Keratinocyte (primary cell): ENCODE measurements at regions of chr5 and their contacts with region 1.

Region 1: DNA sequence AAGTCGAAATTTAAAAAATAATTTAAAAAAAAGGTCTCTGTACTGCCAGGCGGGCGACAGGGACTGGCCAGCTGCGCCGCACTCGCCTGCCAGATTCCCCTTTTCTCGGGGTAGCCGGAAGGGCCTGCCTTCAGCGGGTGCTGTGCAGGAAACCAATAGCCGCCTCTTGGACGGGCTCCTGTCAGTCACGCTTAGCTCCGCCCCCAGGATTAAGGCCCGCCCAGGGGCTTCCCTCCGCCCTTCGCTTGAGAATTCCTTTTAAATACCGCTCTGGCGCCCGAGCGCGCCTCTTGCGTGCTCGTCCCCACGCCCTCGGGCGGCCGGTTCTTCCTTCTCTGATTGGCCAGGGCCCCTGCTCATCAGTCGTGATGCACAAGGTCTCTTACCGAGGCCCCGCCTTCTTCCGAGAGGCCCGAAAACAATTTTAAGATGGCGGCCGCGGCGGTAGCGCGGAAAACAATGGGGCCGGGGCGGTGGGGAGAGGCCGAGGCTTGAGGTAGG is at the start of gene MAML1:
- DNase-seq: peak; percentile 97
- H3K4me3 ChIP-seq: peak within 1 kb of the TSS; percentile 70 to 77 (median 75)
- H3K27ac ChIP-seq: peak within 1 kb of the TSS; percentile 85
- H3K4me1 ChIP-seq: peaks cover 15% of the 10 kb centered on the region
- H3K27me3 ChIP-seq: no peaks in the 10 kb centered on the region
- CTCF ChIP-seq: no peak
- polyA plus RNA-seq, gene MAML1: 3.2 to 6.0 TPM (median 4.9 TPM) in 3 replicates

Region 2: DNA sequence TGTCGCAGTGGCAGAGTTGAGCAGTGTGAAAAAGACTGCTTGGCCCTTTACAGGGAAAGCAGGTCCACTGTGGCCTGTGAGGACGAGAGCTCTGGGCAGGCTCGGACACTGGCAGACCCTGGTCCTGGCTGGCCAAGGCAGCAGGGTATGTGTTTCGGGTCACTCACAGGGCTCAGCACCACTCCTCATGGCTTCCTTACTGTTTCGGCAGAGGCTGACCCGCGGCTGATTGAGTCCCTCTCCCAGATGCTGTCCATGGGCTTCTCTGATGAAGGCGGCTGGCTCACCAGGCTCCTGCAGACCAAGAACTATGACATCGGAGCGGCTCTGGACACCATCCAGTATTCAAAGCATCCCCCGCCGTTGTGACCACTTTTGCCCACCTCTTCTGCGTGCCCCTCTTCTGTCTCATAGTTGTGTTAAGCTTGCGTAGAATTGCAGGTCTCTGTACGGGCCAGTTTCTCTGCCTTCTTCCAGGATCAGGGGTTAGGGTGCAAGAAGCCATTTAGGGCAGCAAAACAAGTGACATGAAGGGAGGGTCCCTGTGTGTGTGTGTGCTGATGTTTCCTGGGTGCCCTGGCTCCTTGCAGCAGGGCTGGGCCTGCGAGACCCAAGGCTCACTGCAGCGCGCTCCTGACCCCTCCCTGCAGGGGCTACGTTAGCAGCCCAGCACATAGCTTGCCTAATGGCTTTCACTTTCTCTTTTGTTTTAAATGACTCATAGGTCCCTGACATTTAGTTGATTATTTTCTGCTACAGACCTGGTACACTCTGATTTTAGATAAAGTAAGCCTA is 104.0 kb after region 1 on chr5:
- dilution Hi-C with region 1: loop called (anchors 25 kb)
- DNase-seq: no peak
- H3K4me3 ChIP-seq: no peak overlapping the region
- H3K27ac ChIP-seq: no peak overlapping the region
- H3K4me1 ChIP-seq: no peaks in the 10 kb centered on the region
- H3K27me3 ChIP-seq: no peaks in the 10 kb centered on the region
- CTCF ChIP-seq: no peak